HCT116 (cell line): ENCODE measurements at regions of chr4 and their contacts with region 1.

Region 1: DNA sequence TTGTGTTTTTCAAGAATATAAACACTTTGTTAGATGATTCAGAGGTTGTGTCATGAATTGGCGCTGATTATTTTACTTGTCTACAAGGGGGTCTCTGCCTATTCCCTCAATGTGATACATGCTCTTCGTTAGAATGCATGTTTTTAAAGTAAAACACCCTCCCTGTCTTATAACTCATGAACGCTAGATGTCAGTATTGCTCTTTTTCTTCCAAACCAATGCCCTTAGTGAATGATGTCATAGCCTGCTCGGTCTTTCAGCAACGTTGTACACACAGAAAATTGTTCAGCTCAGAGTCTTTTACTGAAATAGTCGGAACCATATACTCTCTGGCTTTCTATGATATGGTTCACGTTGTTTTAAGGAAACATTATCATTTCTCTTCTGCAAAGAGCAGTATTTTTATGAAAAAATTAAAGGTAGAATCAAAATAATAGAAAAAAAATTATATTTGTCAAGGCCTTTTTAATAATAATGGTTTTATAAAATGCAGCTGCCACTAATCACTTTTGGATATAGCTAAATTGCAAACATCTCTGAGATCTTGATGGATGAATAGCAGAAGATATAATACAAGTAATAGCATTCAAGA is 292.9 kb downstream of the TLL1 start:
- DNase-seq: peak; percentile 77
- ATAC-seq: peak; percentile 92
- H3K4me3 ChIP-seq: no peak overlapping the region
- H3K27ac ChIP-seq: no peak overlapping the region
- H3K4me1 ChIP-seq: no peaks in the 10 kb centered on the region
- H3K27me3 ChIP-seq: no peaks in the 10 kb centered on the region
- CTCF ChIP-seq: peak; percentile 63 to 86 (median 74)
- POLR2A ChIP-seq: no peak
- RAD21 ChIP-seq: peak; percentile 92

Region 2: GRCh38 chr4:165537028-165537648 is 628.8 kb before region 1 on chr4:
- CTCF ChIA-PET with region 1: interaction called, 5 read pairs
- POLR2A ChIA-PET with region 1: no interaction called
- RAD21 ChIA-PET with region 1: no interaction called
- intact Hi-C with region 1: loop called (anchors 5 kb)
- DNase-seq: peak; percentile 51
- ATAC-seq: peak; percentile 72; the same call in 1 of the 2 replicates
- H3K4me3 ChIP-seq: no peak overlapping the region
- H3K27ac ChIP-seq: no peak overlapping the region
- H3K4me1 ChIP-seq: no peaks in the 10 kb centered on the region
- H3K27me3 ChIP-seq: no peaks in the 10 kb centered on the region
- CTCF ChIP-seq: peak; percentile 44 to 77 (median 63)
- POLR2A ChIP-seq: no peak
- RAD21 ChIP-seq: peak; percentile 86

Region 3: GRCh38 chr4:166594326-166594946 is 428.5 kb after region 1 on chr4:
- CTCF ChIA-PET with region 1: interaction called, 34 read pairs
- POLR2A ChIA-PET with region 1: no interaction called
- RAD21 ChIA-PET with region 1: interaction called, 3 to 13 read pairs
- intact Hi-C with region 1: loop called (anchors 1 kb)
- DNase-seq: peak; percentile 50
- ATAC-seq: peak; percentile 100
- H3K4me3 ChIP-seq: no peak overlapping the region
- H3K27ac ChIP-seq: no peak overlapping the region
- H3K4me1 ChIP-seq: no peaks in the 10 kb centered on the region
- H3K27me3 ChIP-seq: no peaks in the 10 kb centered on the region
- CTCF ChIP-seq: peak; percentile 72 to 80 (median 77)
- POLR2A ChIP-seq: no peak
- RAD21 ChIP-seq: peak; percentile 94

Region 4: GRCh38 chr4:167622481-167623246 is 1456.7 kb after region 1 on chr4:
- CTCF ChIA-PET with region 1: no interaction called
- POLR2A ChIA-PET with region 1: no interaction called
- RAD21 ChIA-PET with region 1: no interaction called
- intact Hi-C with region 1: loop called (anchors 5 kb)
- DNase-seq: peak; percentile 46
- ATAC-seq: peak; percentile 99
- H3K4me3 ChIP-seq: no peak overlapping the region
- H3K27ac ChIP-seq: no peak overlapping the region
- H3K4me1 ChIP-seq: no peaks in the 10 kb centered on the region
- H3K27me3 ChIP-seq: no peaks in the 10 kb centered on the region
- CTCF ChIP-seq: peak; percentile 46 to 89 (median 84); a peak in 5 of 6 replicates
- POLR2A ChIP-seq: no peak
- RAD21 ChIP-seq: peak; percentile 73

Region 5: DNA sequence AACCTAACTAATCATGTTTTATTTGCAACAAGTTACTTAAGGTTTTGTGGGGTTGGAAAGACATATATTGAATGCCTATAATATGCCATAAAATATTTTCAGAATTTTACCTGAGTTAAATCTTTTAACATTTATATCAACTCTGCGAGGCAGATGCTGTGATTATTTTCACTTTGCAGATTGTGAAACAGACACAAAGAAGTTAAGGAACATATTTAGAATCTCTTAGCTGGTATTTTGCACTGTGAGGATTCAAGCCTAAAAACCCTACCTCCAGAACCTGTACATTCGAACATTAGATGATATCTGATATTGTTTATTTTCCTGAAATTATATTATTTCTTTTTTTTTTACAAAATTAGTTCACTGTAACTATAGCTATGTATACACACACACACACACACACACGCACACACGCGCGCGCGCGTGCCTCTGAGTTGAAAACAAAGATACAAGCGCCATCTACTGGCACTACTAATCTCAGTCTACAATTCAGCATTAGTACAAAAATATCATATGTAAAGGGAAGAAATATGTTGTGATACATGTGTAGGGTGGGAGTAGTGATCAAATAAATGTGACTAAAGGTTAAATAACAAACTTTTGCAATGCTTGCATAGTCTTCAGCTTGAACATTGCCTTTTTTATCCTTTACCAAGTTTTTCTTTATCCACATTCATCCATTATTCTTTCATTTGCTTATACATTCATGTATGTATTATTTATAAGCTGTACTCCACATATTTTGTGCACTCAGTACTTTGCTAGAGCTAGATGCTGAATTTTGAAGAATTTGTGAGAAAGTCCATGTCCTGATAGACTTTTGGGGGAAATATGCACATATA is 1987.9 kb after region 1 on chr4:
- CTCF ChIA-PET with region 1: interaction called, 3 read pairs
- POLR2A ChIA-PET with region 1: no interaction called
- RAD21 ChIA-PET with region 1: no interaction called
- intact Hi-C with region 1: loop called (anchors 5 kb)
- DNase-seq: peak; percentile 74
- ATAC-seq: peak; percentile 83
- H3K4me3 ChIP-seq: no peak overlapping the region
- H3K27ac ChIP-seq: peak overlapping the region; percentile 67
- H3K4me1 ChIP-seq: peaks cover 3 to 8% of the 10 kb centered on the region in 2 experiments; a peak in 2 of 4 replicates
- H3K27me3 ChIP-seq: no peaks in the 10 kb centered on the region
- CTCF ChIP-seq: peak; percentile 55 to 78 (median 70)
- POLR2A ChIP-seq: no peak
- RAD21 ChIP-seq: peak; percentile 92